Dorsolateral prefrontal cortex (tissue), 120 donors: ENCODE measurements at regions of chr1 and their contacts with region 1.

Region 1: DNA sequence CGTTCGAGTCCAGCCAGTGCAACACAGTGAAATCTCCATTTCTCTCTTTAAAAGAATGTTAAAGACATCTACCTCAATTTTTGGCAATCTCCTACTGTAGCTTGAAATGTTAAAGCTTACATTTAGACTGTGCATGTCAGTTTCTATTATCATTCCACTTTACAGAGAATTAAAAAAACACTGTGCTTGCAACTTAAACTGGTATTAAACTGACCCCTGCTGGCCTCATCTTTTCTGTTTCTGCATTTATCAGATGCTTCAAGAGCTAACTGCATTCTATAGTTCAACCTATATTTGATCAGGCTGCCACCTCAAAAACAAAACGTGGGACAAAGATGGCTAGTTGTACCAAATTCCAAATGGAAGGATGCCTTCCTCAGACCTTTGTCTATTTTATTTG is 226.5 kb downstream of the SMYD3 start:
- DNase-seq: no peak
- H3K4me3 ChIP-seq: no peak overlapping the region
- H3K27ac ChIP-seq: no peak overlapping the region
- H3K27me3 ChIP-seq: no peaks in the 10 kb centered on the region
- CTCF ChIP-seq: peak in 49 of 56 donors; percentile 13 to 66 (median 44)

Region 2: GRCh38 chr1:246012341-246012740 is 268.2 kb before region 1 on chr1:
- intact Hi-C with region 1: loop called in 1 of 2 experiments (anchors 5 kb)
- DNase-seq: peak in 1 of 10 donors; percentile 19
- H3K4me3 ChIP-seq: no peak overlapping the region
- H3K27ac ChIP-seq: no peak overlapping the region
- H3K27me3 ChIP-seq: no peaks in the 10 kb centered on the region
- CTCF ChIP-seq: peak in 55 of 56 donors; percentile 41 to 84 (median 69)

Region 3: GRCh38 chr1:246161626-246162025 is 118.9 kb before region 1 on chr1:
- intact Hi-C with region 1: no loop called
- DNase-seq: no peak
- H3K4me3 ChIP-seq: no peak overlapping the region
- H3K27ac ChIP-seq: no peak overlapping the region
- H3K27me3 ChIP-seq: no peaks in the 10 kb centered on the region
- CTCF ChIP-seq: no peak